Activated CD4-positive, alpha-beta memory T cell treated with anti-CD3 and anti-CD28 coated beads, Interleukin-2, amount 10 ng/mL, durations not matched to agents 7 days and 5 days (primary cell): ENCODE measurements at regions of chr1 and their contacts with region 1.

Region 1: DNA sequence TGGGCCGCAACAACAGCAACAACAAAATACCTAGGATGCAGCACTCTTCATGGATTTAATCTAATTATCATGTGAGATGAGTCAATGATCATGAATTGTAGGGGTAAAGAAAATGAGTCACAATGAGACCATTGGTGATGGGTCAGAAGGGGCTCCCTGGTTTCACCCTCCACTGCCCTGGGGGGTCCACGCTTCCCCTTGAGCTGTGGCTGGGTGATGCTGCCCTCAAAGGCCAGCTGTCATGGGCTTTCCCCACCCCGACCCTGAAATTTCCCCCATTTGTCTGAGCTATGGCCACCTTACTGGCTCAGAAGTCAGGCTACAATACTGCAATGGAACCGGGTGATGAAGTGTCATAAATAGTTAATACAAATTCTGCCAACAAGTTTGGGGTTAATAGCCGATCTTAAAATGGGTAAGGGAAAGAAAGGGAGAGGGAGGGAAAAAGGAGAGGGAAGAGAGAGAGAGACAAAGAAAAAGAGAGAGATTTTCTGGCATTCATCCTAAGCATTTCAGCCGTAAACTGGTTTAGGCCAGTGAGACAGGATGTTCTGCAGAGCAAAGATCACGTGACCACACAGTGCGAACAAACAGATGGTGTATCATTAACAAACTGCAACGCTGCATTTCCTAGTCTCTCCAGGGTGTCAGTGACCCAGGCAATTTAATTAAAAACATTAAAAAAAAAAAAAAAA is 143.4 kb upstream of the ERRFI1 start:
- DNase-seq: peak; percentile 68
- H3K4me3 Mint-ChIP-seq: peak overlapping the region; percentile 21
- H3K27ac Mint-ChIP-seq: peak overlapping the region; percentile 95
- H3K4me1 Mint-ChIP-seq: peaks cover 37% of the 10 kb centered on the region
- H3K27me3 Mint-ChIP-seq: no peaks in the 10 kb centered on the region

Region 2: GRCh38 chr1:8154621-8155052 is 14.9 kb before region 1 on chr1:
- CTCF ChIA-PET with region 1: interaction called, 5 read pairs
- POLR2A ChIA-PET with region 1: interaction called, 37 read pairs
- DNase-seq: no peak
- H3K4me3 Mint-ChIP-seq: no peak overlapping the region
- H3K27ac Mint-ChIP-seq: no peak overlapping the region
- H3K4me1 Mint-ChIP-seq: peaks cover 32% of the 10 kb centered on the region
- H3K27me3 Mint-ChIP-seq: no peaks in the 10 kb centered on the region

Region 3: GRCh38 chr1:8182034-8182761 is 12.7 kb after region 1 on chr1:
- CTCF ChIA-PET with region 1: no interaction called
- POLR2A ChIA-PET with region 1: interaction called, 16 read pairs
- DNase-seq: peak; percentile 48
- H3K4me3 Mint-ChIP-seq: peak overlapping the region; percentile 46
- H3K27ac Mint-ChIP-seq: peak overlapping the region; percentile 92
- H3K4me1 Mint-ChIP-seq: peaks cover 24% of the 10 kb centered on the region
- H3K27me3 Mint-ChIP-seq: peaks cover 1% of the 10 kb centered on the region

Region 4: DNA sequence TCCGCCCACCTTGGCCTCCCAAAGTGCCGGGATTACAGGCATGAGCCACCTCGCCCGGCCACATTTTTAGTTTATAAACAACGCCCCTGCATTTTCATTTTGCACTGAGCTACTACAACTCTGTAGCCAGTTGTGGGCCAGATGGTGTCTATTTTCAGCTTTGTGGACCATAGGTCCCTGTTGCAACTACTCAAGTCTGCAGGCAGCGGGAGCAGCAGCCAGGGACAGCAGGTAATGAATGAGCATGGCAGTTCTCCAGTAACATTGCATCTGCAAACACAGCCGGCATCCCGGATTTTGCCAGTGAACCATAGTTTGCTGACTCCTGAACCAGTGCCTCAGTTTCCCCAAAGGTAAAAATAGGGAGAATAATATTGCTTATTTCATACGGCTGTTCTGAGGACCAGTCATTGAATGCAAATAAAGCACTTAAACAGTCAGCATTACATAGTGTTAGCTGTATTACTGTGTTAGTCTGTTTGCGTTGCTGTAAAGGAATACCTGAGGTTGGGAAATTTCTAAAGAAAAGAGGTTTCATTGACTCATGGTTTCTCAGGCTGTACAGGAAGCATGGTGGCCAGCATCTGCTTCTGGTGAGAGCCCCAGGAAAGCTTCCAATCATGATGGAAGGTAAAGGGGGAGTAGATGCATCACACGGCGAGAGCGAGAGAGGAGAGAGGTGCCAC is 82.9 kb after region 1 on chr1:
- CTCF ChIA-PET with region 1: no interaction called
- POLR2A ChIA-PET with region 1: no interaction called
- DNase-seq: no peak
- H3K4me3 Mint-ChIP-seq: no peak overlapping the region
- H3K27ac Mint-ChIP-seq: no peak overlapping the region
- H3K4me1 Mint-ChIP-seq: peaks cover 5% of the 10 kb centered on the region
- H3K27me3 Mint-ChIP-seq: no peaks in the 10 kb centered on the region

Region 5: GRCh38 chr1:8494681-8495080 is 325.2 kb after region 1 on chr1:
- CTCF ChIA-PET with region 1: no interaction called
- POLR2A ChIA-PET with region 1: no interaction called
- DNase-seq: no peak
- H3K4me3 Mint-ChIP-seq: no peak overlapping the region
- H3K27ac Mint-ChIP-seq: no peak overlapping the region
- H3K4me1 Mint-ChIP-seq: peaks cover 16% of the 10 kb centered on the region
- H3K27me3 Mint-ChIP-seq: no peaks in the 10 kb centered on the region